CD4-positive, alpha-beta T cell (primary cell): ENCODE measurements at regions of chr20 and their contacts with region 1.

Region 1: DNA sequence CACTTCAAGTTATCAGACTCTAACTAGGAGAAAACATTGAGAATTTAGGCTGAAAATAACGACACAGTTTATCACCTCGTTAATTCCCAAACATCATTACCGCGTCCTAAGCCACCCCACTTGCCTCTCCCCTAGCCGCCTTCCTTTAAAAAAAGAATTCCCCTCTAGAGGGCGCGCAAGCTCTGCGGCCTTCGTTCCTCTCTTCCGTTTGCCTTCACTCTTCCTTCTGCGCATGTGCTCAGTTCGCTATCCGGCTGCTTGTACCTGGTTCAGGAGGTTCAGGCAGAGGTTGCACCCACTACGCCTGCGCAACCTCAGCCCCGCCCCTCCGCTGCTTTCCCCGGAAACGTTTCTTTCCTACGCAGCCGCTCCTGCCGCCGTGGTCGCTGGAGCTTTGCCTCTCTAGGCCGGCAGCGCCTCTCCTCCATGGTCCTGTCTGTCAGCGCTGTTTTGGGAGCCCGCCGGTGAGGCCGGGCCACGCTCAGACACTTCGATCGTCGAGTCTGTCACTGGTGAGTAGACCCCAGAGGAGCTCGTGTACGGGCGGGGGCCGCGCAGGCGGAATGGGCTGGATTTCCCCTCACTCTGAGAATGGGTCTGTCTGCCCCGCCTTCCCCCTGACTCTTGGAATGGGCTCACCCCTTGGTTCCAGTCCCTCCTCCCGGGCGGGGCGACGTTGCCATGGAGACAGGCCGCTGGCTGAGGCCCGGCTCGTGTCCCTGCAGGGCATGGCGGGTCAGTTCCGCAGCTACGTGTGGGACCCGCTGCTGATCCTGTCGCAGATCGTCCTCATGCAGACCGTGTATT is at the start of gene SYS1:
- DNase-seq: peak; percentile 97 to 100 (median 99)
- ATAC-seq: peak; percentile 86
- H3K4me3 ChIP-seq: peak within 1 kb of the TSS; percentile 96
- H3K4me3 Mint-ChIP-seq: peak within 1 kb of the TSS; percentile 91
- H3K27ac ChIP-seq: peak within 1 kb of the TSS; percentile 98 to 99
- H3K27ac Mint-ChIP-seq: peak within 1 kb of the TSS; percentile 85
- H3K4me1 ChIP-seq: peaks cover 55% of the 10 kb centered on the region
- H3K4me1 Mint-ChIP-seq: peaks cover 46% of the 10 kb centered on the region
- H3K27me3 ChIP-seq: no peaks in the 10 kb centered on the region
- H3K27me3 Mint-ChIP-seq: no peaks in the 10 kb centered on the region
- CTCF ChIP-seq: peak; percentile 92
- total RNA-seq, gene SYS1: 94.8 to 107 TPM

Region 2: GRCh38 chr20:45406259-45407066 is 43.5 kb after region 1 on chr20:
- CTCF ChIA-PET with region 1: interaction called, 8 read pairs
- POLR2A ChIA-PET with region 1: interaction called, 30 read pairs
- intact Hi-C with region 1: loop called in 1 of 2 experiments (anchors 2 kb)
- DNase-seq: peak in 12 of 14 experiments; percentile 14 to 69 (median 42)
- ATAC-seq: peak; percentile 50
- H3K4me3 ChIP-seq: peak overlapping the region; percentile 76
- H3K4me3 Mint-ChIP-seq: peak overlapping the region; percentile 91
- H3K27ac ChIP-seq: peak overlapping the region; percentile 40 to 65
- H3K27ac Mint-ChIP-seq: peak overlapping the region; percentile 60
- H3K4me1 ChIP-seq: peaks cover 27% of the 10 kb centered on the region
- H3K4me1 Mint-ChIP-seq: peaks cover 26% of the 10 kb centered on the region
- H3K27me3 ChIP-seq: no peaks in the 10 kb centered on the region
- H3K27me3 Mint-ChIP-seq: no peaks in the 10 kb centered on the region
- CTCF ChIP-seq: no peak

Region 3: GRCh38 chr20:45415774-45416637 is 53.0 kb after region 1 on chr20 and contains the start of gene PIGT:
- CTCF ChIA-PET with region 1: interaction called, 20 read pairs
- POLR2A ChIA-PET with region 1: interaction called, 78 read pairs
- intact Hi-C with region 1: loop called (anchors 1 kb)
- DNase-seq: peak; percentile 75 to 97 (median 86)
- ATAC-seq: peak; percentile 95
- H3K4me3 ChIP-seq: peak within 1 kb of the TSS; percentile 98
- H3K4me3 Mint-ChIP-seq: peak within 1 kb of the TSS; percentile 95
- H3K27ac ChIP-seq: peak within 1 kb of the TSS; percentile 81 to 88
- H3K27ac Mint-ChIP-seq: peak within 1 kb of the TSS; percentile 92
- H3K4me1 ChIP-seq: peaks cover 31% of the 10 kb centered on the region
- H3K4me1 Mint-ChIP-seq: peaks cover 49% of the 10 kb centered on the region
- H3K27me3 ChIP-seq: no peaks in the 10 kb centered on the region
- H3K27me3 Mint-ChIP-seq: no peaks in the 10 kb centered on the region
- CTCF ChIP-seq: no peak
- total RNA-seq, gene PIGT: 157 to 163 TPM

Region 4: GRCh38 chr20:45450097-45450818 is 87.3 kb after region 1 on chr20:
- CTCF ChIA-PET with region 1: interaction called, 10 read pairs
- POLR2A ChIA-PET with region 1: interaction called, 10 read pairs
- intact Hi-C with region 1: loop called in 1 of 2 experiments (anchors 2 kb)
- DNase-seq: peak in 4 of 14 experiments; percentile 25 to 71 (median 62)
- ATAC-seq: peak; percentile 37
- H3K4me3 ChIP-seq: no peak overlapping the region
- H3K4me3 Mint-ChIP-seq: no peak overlapping the region
- H3K27ac ChIP-seq: no peak overlapping the region
- H3K27ac Mint-ChIP-seq: no peak overlapping the region
- H3K4me1 ChIP-seq: peaks cover 4% of the 10 kb centered on the region
- H3K4me1 Mint-ChIP-seq: peaks cover 12% of the 10 kb centered on the region
- H3K27me3 ChIP-seq: peaks cover 6% of the 10 kb centered on the region in 2 experiments
- H3K27me3 Mint-ChIP-seq: peaks cover 20% of the 10 kb centered on the region
- CTCF ChIP-seq: peak; percentile 74